MCF 10A (cell line): ENCODE measurements at regions of chr1 and their contacts with region 1.

Region 1: DNA sequence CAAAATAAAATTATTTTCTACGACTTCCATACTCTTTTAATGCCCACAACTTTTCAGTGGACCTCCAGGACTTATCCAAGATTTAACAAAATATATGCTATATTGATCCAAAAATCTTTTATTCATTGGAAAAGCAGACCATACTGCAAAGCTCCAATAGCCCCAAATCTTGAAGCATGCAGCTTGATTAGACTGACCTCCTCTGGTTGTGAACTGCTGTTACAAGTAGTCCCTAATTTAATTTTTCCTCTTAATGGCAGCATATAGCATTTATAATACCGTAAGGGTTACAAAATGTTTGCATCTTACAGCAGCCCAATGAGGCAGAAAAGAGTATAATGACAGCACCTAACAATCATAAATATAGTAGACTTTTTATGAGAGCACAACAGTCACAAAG is 49.8 kb downstream of the TPR start:
- DNase-seq: peak; percentile 35
- H3K4me3 Mint-ChIP-seq: no peak overlapping the region
- H3K27ac Mint-ChIP-seq: no peak overlapping the region
- H3K4me1 Mint-ChIP-seq: no peaks in the 10 kb centered on the region
- H3K27me3 Mint-ChIP-seq: no peaks in the 10 kb centered on the region
- CTCF ChIP-seq: peak; percentile 47

Region 2: GRCh38 chr1:186363891-186364290 is 38.7 kb after region 1 on chr1:
- CTCF ChIA-PET with region 1: interaction called, 3 read pairs
- POLR2A ChIA-PET with region 1: interaction called, 6 read pairs
- intact Hi-C with region 1: loop called (anchors 5 kb)
- DNase-seq: no peak
- H3K4me3 Mint-ChIP-seq: no peak overlapping the region
- H3K27ac Mint-ChIP-seq: no peak overlapping the region
- H3K4me1 Mint-ChIP-seq: peaks cover 5% of the 10 kb centered on the region
- H3K27me3 Mint-ChIP-seq: no peaks in the 10 kb centered on the region
- CTCF ChIP-seq: no peak